OCI-LY7 (cell line): ENCODE measurements at regions of chr22 and their contacts with region 1.

Region 1: DNA sequence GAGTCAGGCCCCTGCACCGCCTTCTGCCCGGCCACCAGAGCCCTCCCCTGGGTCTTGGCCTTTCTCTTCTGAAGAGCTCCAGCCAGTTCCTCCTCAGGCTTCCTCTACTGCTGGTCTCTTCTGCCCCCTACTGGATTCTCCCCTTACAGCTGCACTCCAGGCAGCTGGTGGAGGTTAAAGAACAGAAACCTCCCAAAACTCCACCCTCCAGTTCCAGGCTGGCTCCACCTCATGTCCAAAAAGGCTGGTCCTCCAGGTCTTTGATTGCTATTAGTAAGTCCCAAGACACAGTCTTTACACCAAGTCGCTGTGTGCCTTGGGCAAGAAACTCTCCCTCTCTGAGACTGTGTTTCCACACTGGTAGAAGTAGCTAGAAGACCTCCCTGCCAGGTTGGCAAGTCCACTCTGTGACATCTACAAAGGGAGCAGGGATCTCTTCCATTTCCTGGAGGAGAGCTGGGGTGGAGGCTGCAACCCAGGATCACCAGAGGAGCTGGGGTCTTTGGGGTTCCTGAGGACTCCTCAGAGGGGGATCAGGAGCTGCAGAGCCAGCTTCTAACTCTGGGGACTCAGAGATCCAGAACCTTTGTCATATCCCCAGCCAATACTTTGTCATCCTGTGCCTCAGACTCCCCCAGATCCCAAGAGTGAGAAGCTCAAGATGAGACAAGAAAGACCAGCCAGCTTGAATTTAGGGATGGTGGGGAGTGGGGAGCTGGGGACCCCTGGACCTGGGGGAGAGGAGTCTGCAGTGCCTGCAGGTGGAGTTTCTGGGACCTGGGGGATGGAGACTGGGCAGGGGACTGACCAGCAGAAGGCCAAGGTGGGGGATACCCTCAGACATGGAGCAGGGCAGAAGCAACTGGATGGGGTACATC is 3.4 kb upstream of the IGLL5 start:
- DNase-seq: peak; percentile 90
- H3K4me3 ChIP-seq: peak overlapping the region; percentile 15
- H3K27ac ChIP-seq: peak overlapping the region; percentile 5
- H3K4me1 ChIP-seq: peaks cover 87% of the 10 kb centered on the region
- CTCF ChIP-seq: peak; percentile 94

Region 2: GRCh38 chr22:22168190-22168940 is 715.9 kb before region 1 on chr22:
- CTCF ChIA-PET with region 1: no interaction called
- POLR2A ChIA-PET with region 1: interaction called, 4 read pairs
- intact Hi-C with region 1: loop called (anchors 10 kb)
- DNase-seq: peak; percentile 96
- H3K4me3 ChIP-seq: peak overlapping the region; percentile 69
- H3K27ac ChIP-seq: peak overlapping the region; percentile 99
- H3K4me1 ChIP-seq: peaks cover 84% of the 10 kb centered on the region
- CTCF ChIP-seq: no peak

Region 3: DNA sequence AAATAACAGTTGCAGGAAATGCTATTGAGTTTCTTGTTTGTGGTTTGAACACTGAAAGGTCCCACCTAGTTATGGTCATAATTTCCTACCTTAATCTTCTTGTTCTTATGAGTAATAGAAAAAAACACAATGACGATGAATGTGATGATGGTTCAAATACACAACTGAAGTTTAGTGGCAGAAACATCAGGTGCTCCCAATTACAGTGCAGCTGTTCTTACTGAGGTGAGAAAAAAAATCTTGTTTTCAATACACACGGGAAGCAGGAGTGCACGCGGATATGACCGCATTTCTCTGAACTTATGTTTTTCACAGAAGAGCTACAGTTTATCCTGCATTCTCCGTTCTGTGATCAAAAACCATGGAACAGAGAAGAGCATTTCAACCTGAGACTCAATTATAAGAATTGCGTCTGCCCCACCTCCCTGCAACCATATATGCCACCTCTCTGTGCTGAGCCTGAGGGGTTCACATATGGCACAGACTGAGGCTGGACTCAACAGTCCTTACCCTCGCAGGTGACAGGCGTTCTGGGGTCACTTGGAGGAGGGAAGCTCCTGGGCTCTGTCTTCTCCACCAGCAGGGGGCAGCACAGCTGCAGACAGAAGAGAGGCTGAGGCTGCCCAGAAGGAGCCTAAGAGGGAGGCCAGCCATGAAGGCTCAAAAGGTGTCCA is 96.3 kb before region 1 on chr22:
- CTCF ChIA-PET with region 1: interaction called, 5 read pairs
- POLR2A ChIA-PET with region 1: interaction called, 3 read pairs
- intact Hi-C with region 1: loop called (anchors 1 kb)
- DNase-seq: peak; percentile 82
- H3K4me3 ChIP-seq: no peak overlapping the region
- H3K27ac ChIP-seq: no peak overlapping the region
- H3K4me1 ChIP-seq: no peaks in the 10 kb centered on the region
- CTCF ChIP-seq: peak; percentile 98

Region 4: DNA sequence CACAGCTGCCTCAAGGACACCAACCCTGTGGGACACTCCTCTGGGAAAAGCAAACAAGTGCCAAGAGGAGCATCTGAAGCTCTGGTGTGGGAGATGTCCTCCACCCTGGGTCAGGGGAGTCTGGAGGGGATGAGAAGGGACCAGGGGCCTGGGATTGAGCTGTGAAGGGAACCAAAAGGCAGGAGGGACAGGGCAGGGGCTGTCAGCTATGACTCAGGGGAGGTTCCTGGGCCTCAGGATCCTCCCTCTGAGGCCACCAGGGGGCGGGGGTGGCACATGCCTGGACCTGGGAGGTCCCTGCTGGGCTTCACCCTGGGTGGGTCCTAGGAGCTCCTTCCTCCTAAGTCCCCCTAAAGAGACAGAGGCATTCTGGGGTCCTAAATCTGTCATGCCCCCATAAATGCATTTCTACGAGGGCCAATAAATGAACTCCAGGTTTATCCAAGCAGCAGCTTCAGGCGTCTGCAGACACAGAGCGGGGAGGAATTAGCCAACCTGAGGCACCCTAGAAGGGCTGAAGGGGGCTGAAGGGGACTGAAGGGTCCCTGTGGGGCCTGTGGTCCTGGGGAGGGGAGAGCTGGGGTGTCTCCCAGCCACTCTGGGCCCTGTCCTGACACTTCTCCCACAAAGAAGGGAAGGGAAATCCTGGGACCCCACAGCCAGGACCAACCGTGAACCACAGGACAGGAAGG is 28.5 kb before region 1 on chr22:
- CTCF ChIA-PET with region 1: interaction called, 39 read pairs
- POLR2A ChIA-PET with region 1: interaction called, 14 read pairs
- intact Hi-C with region 1: loop called (anchors 1 kb)
- DNase-seq: peak; percentile 82
- H3K4me3 ChIP-seq: no peak overlapping the region
- H3K27ac ChIP-seq: peak overlapping the region; percentile 14
- H3K4me1 ChIP-seq: peaks cover 70% of the 10 kb centered on the region
- CTCF ChIP-seq: peak; percentile 91

Region 5: DNA sequence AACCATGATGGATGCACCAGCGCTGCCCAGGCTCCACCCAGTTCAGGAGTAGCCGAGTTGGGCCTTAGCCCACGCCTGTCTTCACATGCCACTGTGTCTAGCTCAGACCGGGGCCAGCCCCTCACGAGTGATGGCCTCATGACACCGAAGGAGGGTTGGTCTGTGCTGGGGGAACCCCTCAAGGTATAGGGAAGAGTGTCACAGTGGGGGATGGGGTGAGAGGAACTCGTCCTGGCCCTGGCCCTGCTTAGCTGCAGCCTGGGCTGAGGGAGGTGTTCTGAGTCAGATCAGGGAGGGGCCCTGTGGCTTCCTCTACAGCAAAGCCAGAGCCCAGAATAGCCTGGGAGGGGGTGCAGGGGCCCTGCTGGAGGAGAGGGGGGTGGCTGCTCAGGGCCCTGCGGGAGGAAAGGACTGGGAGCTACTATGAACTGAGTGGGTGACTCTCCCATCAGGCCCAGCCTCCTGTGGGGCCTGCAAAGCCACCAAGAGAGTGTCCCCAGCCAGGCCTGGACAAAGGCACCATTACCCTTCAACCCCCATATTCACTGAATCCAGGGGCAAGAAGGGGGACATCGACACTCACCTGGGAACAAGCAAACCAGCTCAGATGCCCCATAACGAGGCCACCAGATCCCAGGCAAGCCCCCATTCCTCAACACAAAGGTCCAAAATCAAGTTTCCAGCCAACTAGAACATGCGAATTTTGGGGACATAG is 44.6 kb after region 1 on chr22:
- CTCF ChIA-PET with region 1: interaction called, 28 read pairs
- POLR2A ChIA-PET with region 1: interaction called, 308 read pairs
- intact Hi-C with region 1: no loop called
- DNase-seq: peak; percentile 85
- H3K4me3 ChIP-seq: peak overlapping the region; percentile 33
- H3K27ac ChIP-seq: peak overlapping the region; percentile 91
- H3K4me1 ChIP-seq: peaks cover 100% of the 10 kb centered on the region
- CTCF ChIP-seq: no peak

Region 6: DNA sequence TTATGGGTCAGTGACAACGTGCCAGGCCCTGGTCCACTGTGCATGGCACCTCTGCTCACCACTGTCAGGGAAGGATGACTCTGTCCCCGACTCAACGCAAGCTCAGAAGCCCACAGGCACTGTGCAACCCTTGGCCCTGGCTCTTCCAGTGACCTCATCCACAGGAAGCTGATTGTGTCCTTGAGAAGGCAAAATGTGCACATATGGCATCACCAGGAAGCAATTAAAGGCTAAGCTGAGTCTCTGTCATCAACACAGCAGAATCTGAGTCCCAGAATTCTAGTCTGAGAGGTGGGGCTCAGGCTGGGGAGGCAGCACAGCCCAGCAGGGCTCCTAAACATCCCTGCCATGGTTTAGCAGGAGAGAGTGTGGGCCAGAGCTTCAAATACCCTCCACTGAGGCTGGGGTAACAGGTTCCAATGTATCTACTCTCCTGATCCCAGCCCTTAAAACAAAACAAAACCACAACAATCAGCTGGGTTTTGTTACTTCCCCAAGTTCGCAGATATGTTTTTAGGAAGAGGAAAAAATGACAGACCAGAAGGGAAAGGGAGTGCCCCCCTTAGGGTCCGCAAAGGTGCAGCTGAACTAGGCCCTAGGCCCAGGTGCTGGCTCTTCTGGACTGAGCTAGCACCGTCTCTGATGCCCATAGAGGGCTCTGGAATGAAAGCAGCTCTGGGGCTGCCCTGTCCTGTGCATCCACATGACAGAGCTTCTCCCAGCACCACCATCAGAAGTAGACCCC is 152.6 kb after region 1 on chr22:
- CTCF ChIA-PET with region 1: no interaction called
- POLR2A ChIA-PET with region 1: interaction called, 3 read pairs
- intact Hi-C with region 1: loop called (anchors 2 kb)
- DNase-seq: peak; percentile 58
- H3K4me3 ChIP-seq: peak overlapping the region; percentile 17
- H3K27ac ChIP-seq: peak overlapping the region; percentile 98
- H3K4me1 ChIP-seq: peaks cover 80% of the 10 kb centered on the region
- CTCF ChIP-seq: no peak